MCF 10A (cell line): ENCODE measurements at regions of chr11 and their contacts with region 1.

Region 1: DNA sequence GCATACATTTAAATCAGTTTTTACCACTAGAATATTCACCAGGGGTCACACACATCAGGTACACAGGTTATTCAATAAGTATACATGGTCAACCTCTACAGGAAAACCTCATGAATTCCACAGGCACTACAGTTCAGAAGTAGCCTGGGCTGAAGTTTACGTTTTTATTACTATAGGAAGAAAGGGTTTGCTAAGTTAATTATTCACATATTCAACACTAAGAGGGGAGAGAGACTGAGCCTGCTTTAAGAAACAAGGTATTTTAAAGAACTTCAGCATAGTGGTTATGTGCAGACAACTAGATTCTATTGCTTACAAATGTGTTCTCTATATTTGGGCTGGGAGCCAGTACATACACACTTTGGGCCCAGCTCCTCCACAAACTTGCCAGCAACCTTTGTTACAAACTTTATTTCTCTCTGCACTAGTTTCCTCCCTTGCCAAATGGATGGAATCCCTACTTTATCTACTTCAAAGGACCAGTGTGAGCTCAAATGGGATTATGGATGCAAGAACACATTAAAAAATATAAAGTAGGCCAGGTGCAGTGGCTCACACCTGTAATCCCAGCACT is 31.9 kb downstream of the IL18BP start:
- DNase-seq: no peak
- H3K4me3 Mint-ChIP-seq: no peak overlapping the region
- H3K27ac Mint-ChIP-seq: peak overlapping the region; percentile 27
- H3K4me1 Mint-ChIP-seq: peaks cover under 1% of the 10 kb centered on the region
- H3K27me3 Mint-ChIP-seq: no peaks in the 10 kb centered on the region
- CTCF ChIP-seq: no peak

Region 2: DNA sequence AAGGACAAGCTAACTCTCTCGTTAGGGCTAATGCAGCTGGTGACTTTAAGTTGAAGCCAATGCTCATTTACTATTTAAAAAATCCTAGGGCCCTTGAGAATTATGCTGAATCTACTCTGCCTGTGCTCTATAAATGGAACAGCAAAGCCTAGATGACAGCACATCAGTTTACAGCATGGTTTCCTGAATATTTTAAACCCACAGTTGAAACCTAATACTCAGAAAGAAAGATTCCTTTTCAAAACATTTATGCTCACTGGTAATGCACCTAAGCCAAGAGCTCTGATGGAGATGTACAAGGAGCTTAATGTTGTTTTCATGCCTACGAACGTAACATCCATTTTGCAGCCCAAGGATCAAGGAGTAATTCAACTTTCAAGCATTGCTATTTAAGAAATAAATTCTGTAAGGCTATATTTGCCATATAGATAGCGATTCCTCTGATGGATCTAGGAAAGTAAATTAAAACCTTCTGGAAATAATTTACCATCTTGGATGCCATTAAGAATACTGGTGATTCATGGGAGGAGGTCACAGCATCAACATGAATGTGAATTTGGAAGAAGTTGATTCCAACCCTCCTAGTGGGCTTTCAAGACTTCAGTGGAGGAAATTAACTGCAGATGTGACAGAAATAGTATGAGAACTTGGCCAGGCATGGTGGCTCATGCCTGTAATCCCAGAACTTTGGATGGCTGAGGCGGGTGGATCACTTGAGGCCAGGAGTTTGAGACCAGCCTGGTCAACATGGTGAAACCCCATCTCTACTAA is 116.6 kb before region 1 on chr11:
- CTCF ChIA-PET with region 1: no interaction called
- POLR2A ChIA-PET with region 1: no interaction called
- intact Hi-C with region 1: no loop called
- DNase-seq: no peak
- H3K4me3 Mint-ChIP-seq: no peak overlapping the region
- H3K27ac Mint-ChIP-seq: no peak overlapping the region
- H3K4me1 Mint-ChIP-seq: no peaks in the 10 kb centered on the region
- H3K27me3 Mint-ChIP-seq: no peaks in the 10 kb centered on the region
- CTCF ChIP-seq: no peak

Region 3: GRCh38 chr11:72015511-72016171 is 14.9 kb before region 1 on chr11:
- CTCF ChIA-PET with region 1: interaction called, 39 read pairs
- POLR2A ChIA-PET with region 1: interaction called, 6 read pairs
- intact Hi-C with region 1: no loop called
- DNase-seq: no peak
- H3K4me3 Mint-ChIP-seq: no peak overlapping the region
- H3K27ac Mint-ChIP-seq: no peak overlapping the region
- H3K4me1 Mint-ChIP-seq: peaks cover 34% of the 10 kb centered on the region
- H3K27me3 Mint-ChIP-seq: no peaks in the 10 kb centered on the region
- CTCF ChIP-seq: peak; percentile 20

Region 4: GRCh38 chr11:72058416-72059034 is 28.0 kb after region 1 on chr11:
- CTCF ChIA-PET with region 1: interaction called, 19 read pairs
- POLR2A ChIA-PET with region 1: interaction called, 3 read pairs
- intact Hi-C with region 1: no loop called
- DNase-seq: no peak
- H3K4me3 Mint-ChIP-seq: no peak overlapping the region
- H3K27ac Mint-ChIP-seq: peak overlapping the region; percentile 39
- H3K4me1 Mint-ChIP-seq: peaks cover 9% of the 10 kb centered on the region
- H3K27me3 Mint-ChIP-seq: no peaks in the 10 kb centered on the region
- CTCF ChIP-seq: no peak

Region 5: DNA sequence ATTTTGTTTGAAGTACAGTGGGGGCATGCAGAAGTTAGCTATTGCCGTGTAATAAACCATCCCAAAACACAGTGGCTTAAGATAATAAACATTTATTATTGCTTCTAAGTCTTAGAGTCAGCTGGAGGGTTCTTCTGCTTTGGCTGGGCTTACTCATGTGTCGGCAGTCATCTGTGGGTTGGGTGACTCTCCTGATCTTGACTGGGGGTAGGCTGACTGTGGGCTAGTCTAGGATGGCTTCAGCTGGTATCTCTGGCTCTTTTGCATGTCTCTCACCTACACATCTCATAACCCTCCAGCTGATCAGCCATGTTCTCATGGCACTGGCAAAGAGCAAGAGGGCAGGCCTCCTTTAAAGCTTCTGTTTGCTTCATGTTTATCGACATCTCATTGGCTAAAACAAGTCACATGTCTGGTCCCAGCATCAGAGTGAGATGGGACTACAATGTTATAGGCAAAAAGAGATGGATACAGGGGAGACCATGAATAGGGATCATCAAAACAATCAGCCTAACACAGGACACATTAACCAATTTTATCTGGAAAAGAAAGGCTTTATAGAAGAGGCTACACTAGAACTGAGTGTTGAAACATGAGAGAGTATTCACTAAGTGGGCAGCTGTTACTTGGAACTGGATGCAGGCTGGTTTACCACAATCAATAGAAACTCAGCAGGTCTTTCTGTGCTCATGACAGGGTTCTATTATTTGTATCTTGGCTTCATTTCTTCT is 55.2 kb after region 1 on chr11:
- CTCF ChIA-PET with region 1: interaction called, 155 read pairs
- POLR2A ChIA-PET with region 1: interaction called, 26 read pairs
- intact Hi-C with region 1: no loop called
- DNase-seq: no peak
- H3K4me3 Mint-ChIP-seq: no peak overlapping the region
- H3K27ac Mint-ChIP-seq: no peak overlapping the region
- H3K4me1 Mint-ChIP-seq: peaks cover 23% of the 10 kb centered on the region
- H3K27me3 Mint-ChIP-seq: no peaks in the 10 kb centered on the region
- CTCF ChIP-seq: no peak

Region 6: GRCh38 chr11:72102946-72103753 is 72.6 kb after region 1 on chr11 and contains the start of gene LAMTOR1:
- CTCF ChIA-PET with region 1: interaction called, 29 read pairs
- POLR2A ChIA-PET with region 1: interaction called, 10 read pairs
- intact Hi-C with region 1: no loop called
- DNase-seq: peak; percentile 98
- H3K4me3 Mint-ChIP-seq: peak within 1 kb of the TSS; percentile 100
- H3K27ac Mint-ChIP-seq: peak within 1 kb of the TSS; percentile 100
- H3K4me1 Mint-ChIP-seq: peaks cover 43% of the 10 kb centered on the region
- H3K27me3 Mint-ChIP-seq: no peaks in the 10 kb centered on the region
- CTCF ChIP-seq: peak; percentile 29
- total RNA-seq, gene LAMTOR1: 76.9 and 82.4 TPM in 2 replicates

Region 7: GRCh38 chr11:72413914-72414628 is 383.5 kb after region 1 on chr11:
- CTCF ChIA-PET with region 1: no interaction called
- POLR2A ChIA-PET with region 1: no interaction called
- intact Hi-C with region 1: loop called (anchors 1 kb)
- DNase-seq: peak; percentile 85
- H3K4me3 Mint-ChIP-seq: no peak overlapping the region
- H3K27ac Mint-ChIP-seq: no peak overlapping the region
- H3K4me1 Mint-ChIP-seq: peaks cover 5% of the 10 kb centered on the region
- H3K27me3 Mint-ChIP-seq: no peaks in the 10 kb centered on the region
- CTCF ChIP-seq: peak; percentile 82